Caco-2 (cell line): ENCODE measurements at regions of chr11 and their contacts with region 1.

Region 1: DNA sequence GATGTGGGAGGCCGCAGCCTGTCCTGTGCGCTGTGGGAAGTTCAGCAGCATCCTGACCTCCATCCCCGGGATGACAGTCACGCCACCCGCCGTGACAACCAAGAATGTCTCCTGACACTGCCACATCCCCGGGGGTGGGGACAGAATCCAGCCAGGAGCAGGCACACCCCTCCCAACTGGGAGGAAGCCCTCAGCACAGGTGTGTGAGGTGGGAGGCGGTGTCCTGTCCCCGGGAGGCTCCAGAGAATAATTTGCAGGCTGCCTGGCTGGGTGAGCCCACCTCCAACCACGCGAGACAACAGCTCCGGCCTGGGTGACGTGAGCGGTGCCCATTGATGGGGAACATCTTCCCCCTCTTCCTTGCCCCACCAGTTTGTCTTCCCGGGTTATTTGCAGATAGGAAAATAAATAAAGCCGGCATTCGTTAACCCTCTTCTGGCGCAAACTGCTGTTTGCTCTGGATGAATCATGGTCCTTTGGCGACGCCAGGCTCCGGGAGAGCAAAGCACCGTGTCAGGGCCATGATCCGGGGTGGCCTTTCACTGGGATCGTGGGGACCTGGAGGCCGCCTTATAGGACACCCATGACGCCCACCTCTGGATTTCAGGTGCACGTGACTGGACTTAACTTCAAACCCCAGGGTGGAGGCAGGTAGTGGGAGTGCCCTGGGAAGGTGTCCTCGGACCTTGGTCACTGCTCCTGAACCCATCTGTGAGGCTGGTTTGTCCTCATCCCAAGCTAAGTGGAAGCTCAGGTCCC is 13.8 kb downstream of the CCND1 start:
- DNase-seq: peak; percentile 67 to 71
- H3K4me3 ChIP-seq: no peak overlapping the region
- H3K4me3 Mint-ChIP-seq: peak overlapping the region; percentile 50
- H3K27ac Mint-ChIP-seq: peak overlapping the region; percentile 14
- H3K4me1 ChIP-seq: peaks cover 42% of the 10 kb centered on the region
- H3K4me1 Mint-ChIP-seq: peaks cover 34% of the 10 kb centered on the region
- H3K27me3 ChIP-seq: no peaks in the 10 kb centered on the region
- H3K27me3 Mint-ChIP-seq: no peaks in the 10 kb centered on the region
- CTCF ChIP-seq: no peak

Region 2: GRCh38 chr11:69393953-69394883 is 260.5 kb before region 1 on chr11:
- CTCF ChIA-PET with region 1: no interaction called
- POLR2A ChIA-PET with region 1: no interaction called
- intact Hi-C with region 1: no loop called
- DNase-seq: no peak
- H3K4me3 ChIP-seq: no peak overlapping the region
- H3K4me3 Mint-ChIP-seq: no peak overlapping the region
- H3K27ac Mint-ChIP-seq: no peak overlapping the region
- H3K4me1 ChIP-seq: no peaks in the 10 kb centered on the region
- H3K4me1 Mint-ChIP-seq: no peaks in the 10 kb centered on the region
- H3K27me3 ChIP-seq: no peaks in the 10 kb centered on the region
- H3K27me3 Mint-ChIP-seq: no peaks in the 10 kb centered on the region
- CTCF ChIP-seq: no peak

Region 3: GRCh38 chr11:69443138-69443967 is 211.4 kb before region 1 on chr11:
- CTCF ChIA-PET with region 1: no interaction called
- POLR2A ChIA-PET with region 1: no interaction called
- intact Hi-C with region 1: loop called (anchors 5 kb)
- DNase-seq: peak; percentile 99
- H3K4me3 ChIP-seq: peak overlapping the region; percentile 36
- H3K4me3 Mint-ChIP-seq: peak overlapping the region; percentile 57
- H3K27ac Mint-ChIP-seq: peak overlapping the region; percentile 88
- H3K4me1 ChIP-seq: peaks cover 48% of the 10 kb centered on the region
- H3K4me1 Mint-ChIP-seq: peaks cover 51% of the 10 kb centered on the region
- H3K27me3 ChIP-seq: no peaks in the 10 kb centered on the region
- H3K27me3 Mint-ChIP-seq: no peaks in the 10 kb centered on the region
- CTCF ChIP-seq: no peak

Region 4: DNA sequence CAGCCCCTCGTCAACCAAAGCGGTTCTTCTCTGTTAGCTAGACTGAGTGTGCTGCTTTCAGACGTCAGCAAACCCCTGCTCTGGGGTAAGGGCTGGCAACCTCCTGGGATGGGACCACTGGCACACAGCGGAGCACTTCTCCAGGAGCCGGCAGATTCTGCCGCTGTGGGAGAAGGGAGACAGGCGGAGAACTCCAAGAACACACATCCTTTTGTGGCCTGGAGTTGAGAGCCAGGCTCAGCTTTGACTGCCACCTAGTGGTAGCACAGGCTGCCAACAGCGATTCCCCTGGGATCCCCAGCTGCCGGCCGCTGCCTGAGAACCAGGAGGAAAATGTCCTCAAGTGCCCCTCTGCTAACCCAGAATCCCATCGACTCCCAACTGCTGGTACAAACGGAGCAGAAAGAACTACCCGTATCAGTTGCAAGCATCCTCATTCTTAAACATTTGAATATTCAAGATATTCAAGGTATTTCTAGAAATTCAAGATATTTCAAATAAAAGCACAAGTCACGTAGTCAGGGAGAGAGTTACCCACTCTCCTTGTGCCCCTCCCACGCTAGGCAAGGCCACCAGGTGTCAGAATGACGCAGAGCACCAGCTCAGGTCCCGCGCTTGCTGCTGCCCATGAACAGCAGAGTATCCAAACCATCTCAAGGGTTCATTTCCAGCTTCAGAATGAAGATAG is 15.6 kb after region 1 on chr11:
- CTCF ChIA-PET with region 1: interaction called, 44 read pairs
- POLR2A ChIA-PET with region 1: interaction called, 7 read pairs
- intact Hi-C with region 1: loop called (anchors 1 kb)
- DNase-seq: peak; percentile 89 to 93
- H3K4me3 ChIP-seq: no peak overlapping the region
- H3K4me3 Mint-ChIP-seq: no peak overlapping the region
- H3K27ac Mint-ChIP-seq: peak overlapping the region; percentile 34
- H3K4me1 ChIP-seq: peaks cover 15% of the 10 kb centered on the region
- H3K4me1 Mint-ChIP-seq: peaks cover 17% of the 10 kb centered on the region
- H3K27me3 ChIP-seq: no peaks in the 10 kb centered on the region
- H3K27me3 Mint-ChIP-seq: peaks cover under 1% of the 10 kb centered on the region
- CTCF ChIP-seq: peak; percentile 99